Gastrocnemius medialis (tissue), 4 donors: ENCODE measurements at regions of chr4 and their contacts with region 1.

Region 1: DNA sequence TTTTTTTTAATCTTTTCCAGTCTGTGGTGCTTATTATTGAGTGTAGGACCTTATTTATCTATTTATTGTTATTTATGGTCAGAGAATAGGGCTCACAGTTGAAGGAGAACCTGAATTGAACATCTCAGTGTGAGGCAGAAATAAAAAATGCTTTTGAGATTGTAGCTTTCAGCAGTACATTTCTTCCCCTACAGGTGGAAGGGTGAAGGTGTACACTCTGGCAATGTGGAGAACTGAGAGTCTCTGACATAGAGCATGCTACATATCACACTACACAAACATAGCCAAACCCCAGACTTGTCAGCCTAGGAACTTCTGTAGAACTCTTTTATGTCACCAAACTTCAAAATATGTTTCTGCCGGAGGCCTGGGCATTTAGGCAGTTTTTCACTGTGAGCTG is 140.2 kb downstream of the STIM2 start:
- DNase-seq: no peak
- ATAC-seq: no peak
- H3K4me3 ChIP-seq: no peak overlapping the region
- H3K27ac ChIP-seq: no peak overlapping the region
- H3K4me1 ChIP-seq: peaks cover 0 to 5% of the 10 kb centered on the region in 2 donors
- H3K27me3 ChIP-seq: no peaks in the 10 kb centered on the region
- CTCF ChIP-seq: no peak
- POLR2A ChIP-seq: no peak

Region 2: DNA sequence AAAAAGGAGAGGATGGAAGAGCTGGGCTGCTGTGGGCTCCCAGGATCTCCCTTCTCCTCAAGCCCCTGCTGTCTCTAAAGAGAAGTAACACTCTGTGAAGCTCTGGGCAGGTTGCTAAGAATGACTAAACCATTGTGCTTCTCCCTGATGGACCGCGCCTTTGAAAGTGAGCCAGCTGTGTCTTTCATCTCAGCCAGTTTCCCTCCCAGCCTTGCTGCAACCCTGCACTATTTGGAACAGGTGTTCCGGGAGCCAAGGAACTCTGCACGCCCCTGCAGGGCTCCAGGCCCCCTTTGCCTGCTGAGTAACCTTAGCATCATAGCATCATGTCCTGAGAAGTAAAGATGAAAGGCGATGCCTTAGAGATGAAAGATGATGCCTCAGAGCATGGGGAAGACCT is 1047.1 kb before region 1 on chr4:
- in situ Hi-C with region 1: no loop called
- intact Hi-C with region 1: no loop called
- DNase-seq: no peak
- ATAC-seq: no peak
- H3K4me3 ChIP-seq: no peak overlapping the region
- H3K27ac ChIP-seq: no peak overlapping the region
- H3K4me1 ChIP-seq: no peaks in the 10 kb centered on the region
- H3K27me3 ChIP-seq: no peaks in the 10 kb centered on the region
- CTCF ChIP-seq: no peak
- POLR2A ChIP-seq: no peak

Region 3: GRCh38 chr4:25986807-25987206 is 1014.0 kb before region 1 on chr4:
- in situ Hi-C with region 1: loop called in 1 of 4 experiments (anchors 25 kb)
- intact Hi-C with region 1: loop called (anchors 5 kb)
- DNase-seq: no peak
- ATAC-seq: no peak
- H3K4me3 ChIP-seq: no peak overlapping the region
- H3K27ac ChIP-seq: no peak overlapping the region
- H3K4me1 ChIP-seq: peaks cover 3 to 4% of the 10 kb centered on the region in 2 donors
- H3K27me3 ChIP-seq: no peaks in the 10 kb centered on the region
- CTCF ChIP-seq: no peak
- POLR2A ChIP-seq: no peak

Region 4: DNA sequence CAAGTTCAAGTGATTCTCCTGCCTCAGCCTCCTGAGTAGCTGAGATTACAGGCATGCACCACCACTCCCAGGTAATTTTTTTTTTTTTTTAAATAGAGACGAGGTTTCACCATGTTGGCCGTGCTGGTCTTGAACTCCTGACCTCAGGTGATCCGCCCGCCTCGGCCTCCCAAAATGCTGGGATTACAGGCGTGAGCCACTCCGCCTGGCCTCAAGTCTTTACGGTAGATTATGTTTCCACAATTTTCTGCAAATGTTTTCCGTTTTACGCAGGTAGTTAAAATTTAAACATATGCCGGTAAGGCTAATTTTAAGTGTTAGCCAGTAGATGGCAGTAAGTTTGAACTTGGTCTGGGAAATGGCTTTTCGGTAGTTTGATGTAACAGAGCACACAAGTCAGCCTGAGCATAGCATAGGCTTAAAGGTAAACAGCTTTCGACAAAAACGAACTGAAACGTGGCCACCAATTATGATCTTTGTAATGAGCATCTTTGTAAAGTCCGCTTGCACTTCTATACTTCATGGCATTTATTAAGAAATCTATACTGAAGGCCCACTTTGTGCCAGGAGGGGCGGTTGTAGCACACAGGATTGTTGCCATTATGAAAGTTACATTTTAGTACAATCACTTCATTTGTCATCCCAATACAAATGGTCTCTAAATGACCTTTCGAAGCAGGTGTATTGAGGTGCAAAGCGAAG is 541.6 kb before region 1 on chr4:
- in situ Hi-C with region 1: loop called in 3 of 4 experiments (anchors 5 to 25 kb)
- intact Hi-C with region 1: no loop called
- DNase-seq: no peak
- ATAC-seq: peak in 1 of 2 donors; percentile 62
- H3K4me3 ChIP-seq: no peak overlapping the region
- H3K27ac ChIP-seq: no peak overlapping the region
- H3K4me1 ChIP-seq: no peaks in the 10 kb centered on the region
- H3K27me3 ChIP-seq: no peaks in the 10 kb centered on the region
- CTCF ChIP-seq: peak in 3 of 5 experiments; percentile 45 to 53 (median 52)
- POLR2A ChIP-seq: no peak

Region 5: DNA sequence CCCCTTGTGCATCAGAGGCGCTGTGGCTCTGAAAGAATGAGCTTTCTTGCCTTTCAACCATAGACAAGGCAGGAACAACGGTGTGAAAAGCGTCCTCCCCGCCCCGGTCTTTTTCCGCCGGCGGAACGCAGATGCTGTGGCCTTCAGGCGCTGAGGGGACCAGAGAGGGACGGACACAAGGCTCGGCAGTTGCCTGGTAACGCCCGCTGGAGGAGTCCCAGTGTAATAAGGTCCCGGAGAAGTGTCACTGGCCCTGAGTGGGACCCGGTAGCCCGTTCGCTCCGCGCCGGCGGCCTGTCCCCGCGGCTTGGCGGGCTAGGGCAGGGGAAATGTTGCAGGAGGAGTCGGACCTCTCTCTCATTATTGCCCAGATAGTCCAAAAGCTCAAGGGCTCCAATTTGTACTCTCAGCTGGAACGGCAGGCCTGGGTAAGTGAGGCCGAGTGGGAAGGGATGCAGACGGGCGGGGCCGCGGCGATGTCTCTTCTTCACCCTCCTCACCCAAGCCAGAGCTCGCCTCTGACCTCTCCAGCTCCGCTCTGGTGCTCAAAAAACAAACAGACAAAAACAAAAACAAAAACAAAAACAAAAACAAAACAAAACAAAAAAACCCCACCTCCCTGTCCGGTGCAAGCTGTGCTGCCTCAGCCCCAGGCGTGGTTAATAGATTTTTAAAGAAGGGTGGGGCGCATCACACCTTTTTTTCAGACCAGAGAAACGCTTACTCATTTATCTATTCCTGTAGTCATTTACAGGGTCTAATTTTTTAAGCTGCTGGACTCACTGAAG is 416.8 kb before region 1 on chr4 and contains the start of gene TBC1D19:
- in situ Hi-C with region 1: no loop called
- intact Hi-C with region 1: loop called (anchors 10 kb)
- DNase-seq: peak; percentile 81 to 82
- ATAC-seq: peak; percentile 99 to 100
- H3K4me3 ChIP-seq: peak within 1 kb of the TSS; percentile 53 to 96 (median 67)
- H3K27ac ChIP-seq: peak within 1 kb of the TSS; percentile 64 to 84 (median 69)
- H3K4me1 ChIP-seq: peaks cover 6 to 9% of the 10 kb centered on the region in 2 donors
- H3K27me3 ChIP-seq: no peaks in the 10 kb centered on the region
- CTCF ChIP-seq: no peak
- POLR2A ChIP-seq: peak; percentile 23 to 35
- total RNA-seq, gene TBC1D19: 6.5 to 7.0 (median 6.8) TPM

Region 6: GRCh38 chr4:26787461-26788340 is 213.1 kb before region 1 on chr4:
- in situ Hi-C with region 1: loop called in 1 of 4 experiments (anchors 25 kb)
- intact Hi-C with region 1: loop called (anchors 5 kb)
- DNase-seq: peak in 1 of 2 donors; percentile 30
- ATAC-seq: peak; percentile 74 to 79
- H3K4me3 ChIP-seq: peak overlapping the region; percentile 7 to 43 (median 18)
- H3K27ac ChIP-seq: peak overlapping the region; percentile 28 to 71 (median 60)
- H3K4me1 ChIP-seq: peaks cover 27 to 39% of the 10 kb centered on the region in 2 donors
- H3K27me3 ChIP-seq: no peaks in the 10 kb centered on the region
- CTCF ChIP-seq: peak in 3 of 5 experiments; percentile 30 to 59 (median 44)
- POLR2A ChIP-seq: no peak

Region 7: GRCh38 chr4:26860157-26860921 is 140.5 kb before region 1 on chr4 and contains the start of gene STIM2:
- in situ Hi-C with region 1: no loop called
- intact Hi-C with region 1: loop called (anchors 5 kb)
- DNase-seq: peak; percentile 93 to 95
- ATAC-seq: peak; percentile 81 to 87
- H3K4me3 ChIP-seq: peak within 1 kb of the TSS; percentile 76 to 84 (median 78)
- H3K27ac ChIP-seq: peak within 1 kb of the TSS; percentile 78 to 90 (median 86)
- H3K4me1 ChIP-seq: peaks cover 47 to 48% of the 10 kb centered on the region in 2 donors
- H3K27me3 ChIP-seq: no peaks in the 10 kb centered on the region
- CTCF ChIP-seq: peak; percentile 6 to 52 (median 38)
- POLR2A ChIP-seq: peak; percentile 76 to 85
- total RNA-seq, gene STIM2: 3.9 to 7.6 (median 4.9) TPM

Region 8: DNA sequence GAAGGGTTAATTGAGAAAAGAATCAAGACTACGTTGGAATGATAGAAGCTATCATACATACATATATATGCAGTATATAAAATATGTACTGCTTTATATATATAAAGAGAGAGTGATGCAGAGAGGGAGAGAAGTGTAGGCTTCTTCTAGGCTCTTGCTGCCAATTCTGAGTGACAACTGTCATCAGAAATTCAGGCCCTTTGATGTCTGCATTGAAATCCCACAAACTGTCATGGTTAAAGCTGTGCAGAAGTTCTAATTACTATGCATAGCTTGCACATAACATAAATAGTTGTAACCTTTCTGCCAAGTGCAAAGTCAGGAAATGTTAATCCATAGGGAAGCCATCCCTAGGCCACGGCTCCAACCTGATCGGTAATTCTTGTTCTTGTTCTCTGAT is 110.8 kb after region 1 on chr4:
- in situ Hi-C with region 1: no loop called
- intact Hi-C with region 1: no loop called
- DNase-seq: no peak
- ATAC-seq: no peak
- H3K4me3 ChIP-seq: no peak overlapping the region
- H3K27ac ChIP-seq: no peak overlapping the region
- H3K4me1 ChIP-seq: no peaks in the 10 kb centered on the region
- H3K27me3 ChIP-seq: no peaks in the 10 kb centered on the region
- CTCF ChIP-seq: no peak
- POLR2A ChIP-seq: no peak